T-cell (primary cell): ENCODE measurements at regions of chr14 and their contacts with region 1.

Region 1: DNA sequence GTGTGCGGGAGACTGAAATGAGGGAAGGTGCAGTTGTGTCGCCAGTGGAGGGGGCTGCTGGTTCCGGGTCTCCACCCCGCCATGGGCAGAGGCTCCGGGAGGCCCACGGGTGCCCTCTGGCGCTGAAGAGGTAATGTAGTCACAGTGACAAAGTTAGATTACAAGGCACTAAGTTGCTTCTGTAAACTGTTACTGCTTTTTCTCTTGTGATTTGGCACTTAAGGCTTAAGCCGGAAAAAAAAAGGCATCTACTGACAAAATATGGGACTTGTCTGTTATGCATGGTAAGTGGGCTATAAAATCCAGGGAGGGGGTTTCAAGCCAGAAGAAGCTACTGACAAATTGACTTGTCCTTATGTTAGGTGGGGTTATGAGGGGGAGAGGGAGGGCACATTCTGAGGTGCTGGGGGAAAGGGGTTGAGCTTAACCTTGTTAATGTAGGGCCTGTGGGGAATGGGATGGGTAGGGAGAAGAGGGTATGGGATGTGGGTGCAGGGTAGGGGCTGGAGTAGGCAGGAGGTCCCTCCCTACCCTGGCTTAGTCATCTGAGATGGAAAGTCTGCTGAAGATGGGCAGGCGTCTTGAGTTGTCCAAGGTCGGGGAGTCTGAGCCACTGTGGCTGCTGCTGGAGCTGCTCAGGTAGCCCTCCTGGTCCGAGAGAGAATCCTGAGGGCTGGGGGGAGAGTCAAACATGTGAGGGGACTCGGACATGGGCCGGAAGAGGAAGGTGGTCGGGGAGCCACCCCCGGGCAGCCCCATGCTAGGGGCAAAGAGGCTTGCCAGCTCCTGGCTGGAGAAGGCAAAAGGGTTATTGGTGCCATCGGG is 3.7 kb downstream of the ZFP36L1 start:
- DNase-seq: peak; percentile 73 to 92 (median 88)
- ATAC-seq: peak; percentile 39 to 49 (median 46)
- H3K4me3 ChIP-seq: peak overlapping the region; percentile 95 to 100
- H3K4me3 Mint-ChIP-seq: peak overlapping the region; percentile 91 to 98 (median 96)
- H3K27ac ChIP-seq: peak overlapping the region; percentile 100
- H3K27ac Mint-ChIP-seq: peak overlapping the region; percentile 96 to 97
- H3K4me1 ChIP-seq: peaks cover 34 to 59% of the 10 kb centered on the region in 2 experiments
- H3K4me1 Mint-ChIP-seq: peaks cover 52 to 70% (median 57%) of the 10 kb centered on the region in 3 donors
- H3K27me3 ChIP-seq: no peaks in the 10 kb centered on the region
- H3K27me3 Mint-ChIP-seq: no peaks in the 10 kb centered on the region

Region 2: DNA sequence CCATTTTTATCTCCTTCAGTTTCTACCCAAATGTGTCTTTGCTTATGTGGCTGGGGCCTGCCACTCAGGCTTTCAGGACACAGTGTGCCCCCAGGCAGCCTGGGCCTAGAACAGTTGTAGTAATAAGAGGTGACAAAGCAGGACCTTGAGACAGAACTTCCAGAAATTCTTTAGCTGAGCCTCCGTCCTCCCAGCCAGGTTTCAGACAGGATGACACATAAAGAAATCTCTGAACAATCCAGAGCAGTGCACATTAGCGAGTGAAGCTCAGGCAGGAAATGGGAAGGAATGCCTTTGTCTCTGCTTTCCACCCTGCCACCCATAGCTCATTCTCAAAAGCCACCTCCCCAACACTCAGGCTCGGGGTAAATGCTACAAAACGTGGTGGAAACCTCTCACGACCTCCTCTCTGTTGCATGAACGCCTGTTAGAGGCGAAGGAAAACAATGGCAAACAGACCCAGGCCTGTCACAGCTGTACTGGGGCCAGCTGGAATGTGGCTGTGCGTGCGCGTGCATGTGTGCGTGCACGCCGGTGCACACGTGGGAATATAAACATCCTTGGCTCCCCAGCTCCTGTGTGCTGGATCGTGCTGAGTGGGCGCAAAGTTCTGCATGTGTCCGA is 283.1 kb before region 1 on chr14:
- CTCF ChIA-PET with region 1: interaction called, 3 to 10 read pairs
- POLR2A ChIA-PET with region 1: interaction called, 4 to 18 read pairs
- DNase-seq: no peak
- ATAC-seq: no peak
- H3K4me3 ChIP-seq: no peak overlapping the region
- H3K4me3 Mint-ChIP-seq: peak overlapping the region; percentile 35 to 64 (median 40)
- H3K27ac ChIP-seq: peak overlapping the region; percentile 76
- H3K27ac Mint-ChIP-seq: peak overlapping the region; percentile 88 to 93
- H3K4me1 ChIP-seq: peaks cover 47 to 75% of the 10 kb centered on the region in 2 experiments
- H3K4me1 Mint-ChIP-seq: peaks cover 67 to 87% (median 84%) of the 10 kb centered on the region in 3 donors
- H3K27me3 ChIP-seq: peaks cover 0 to 4% of the 10 kb centered on the region in 2 experiments
- H3K27me3 Mint-ChIP-seq: no peaks in the 10 kb centered on the region

Region 3: DNA sequence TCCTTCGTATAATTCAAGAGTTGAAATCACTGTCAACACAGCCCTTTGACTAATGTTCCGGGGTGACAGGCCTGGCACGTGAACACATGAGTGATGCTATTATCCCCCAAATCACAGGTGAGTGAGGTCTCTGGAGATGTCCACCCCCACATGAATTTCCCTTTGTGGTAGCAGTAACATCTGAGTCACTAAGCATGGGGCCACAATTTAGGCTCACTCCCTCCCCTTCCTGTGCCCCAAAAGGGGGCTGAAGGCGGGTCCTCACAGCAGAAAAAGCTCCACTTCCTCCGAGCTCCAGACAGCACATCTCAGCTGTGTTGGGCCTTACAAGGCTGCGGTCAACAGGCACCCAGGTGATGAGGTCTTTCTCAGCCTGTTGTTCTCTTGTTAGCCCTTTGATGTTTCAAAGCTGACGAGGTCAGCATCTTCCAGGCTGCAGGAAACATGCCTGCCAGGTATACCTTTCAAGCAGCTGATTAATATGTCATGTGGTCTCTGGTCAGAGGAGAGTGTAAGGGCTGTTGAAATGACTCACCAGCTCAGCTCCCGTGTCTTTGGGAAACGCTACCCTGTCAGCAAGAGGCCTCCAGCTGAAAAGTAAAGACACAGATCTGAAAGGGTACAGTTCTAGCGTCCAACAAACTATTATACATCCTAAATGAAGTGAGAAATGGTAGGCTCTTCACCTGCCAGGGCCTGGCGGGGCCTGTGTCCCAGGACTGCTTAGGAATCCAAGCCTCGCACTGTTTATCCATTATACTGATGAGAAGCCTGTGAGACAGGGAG is 103.6 kb before region 1 on chr14:
- CTCF ChIA-PET with region 1: interaction called in 1 of 2 experiments, 11 read pairs
- POLR2A ChIA-PET with region 1: interaction called in 1 of 2 experiments, 5 read pairs
- DNase-seq: peak; percentile 60 to 89 (median 77)
- ATAC-seq: peak; percentile 86 to 90 (median 88)
- H3K4me3 ChIP-seq: no peak overlapping the region
- H3K4me3 Mint-ChIP-seq: peak overlapping the region; percentile 4 to 78 (median 50)
- H3K27ac ChIP-seq: peak overlapping the region; percentile 88
- H3K27ac Mint-ChIP-seq: peak overlapping the region; percentile 95 to 96
- H3K4me1 ChIP-seq: peaks cover 29 to 60% of the 10 kb centered on the region in 2 experiments
- H3K4me1 Mint-ChIP-seq: peaks cover 57 to 71% (median 66%) of the 10 kb centered on the region in 3 donors
- H3K27me3 ChIP-seq: no peaks in the 10 kb centered on the region
- H3K27me3 Mint-ChIP-seq: no peaks in the 10 kb centered on the region

Region 4: GRCh38 chr14:68816262-68816942 is 27.2 kb after region 1 on chr14:
- CTCF ChIA-PET with region 1: interaction called, 36 to 95 read pairs
- POLR2A ChIA-PET with region 1: interaction called, 13 to 26 read pairs
- DNase-seq: peak; percentile 63 to 93 (median 83)
- ATAC-seq: peak; percentile 76 to 82 (median 81)
- H3K4me3 ChIP-seq: peak overlapping the region; percentile 62 to 73
- H3K4me3 Mint-ChIP-seq: peak overlapping the region; percentile 79 to 89 (median 82)
- H3K27ac ChIP-seq: peak overlapping the region; percentile 97
- H3K27ac Mint-ChIP-seq: peak overlapping the region; percentile 97 to 98
- H3K4me1 ChIP-seq: peaks cover 32 to 82% of the 10 kb centered on the region in 2 experiments
- H3K4me1 Mint-ChIP-seq: peaks cover 69 to 86% (median 71%) of the 10 kb centered on the region in 3 donors
- H3K27me3 ChIP-seq: no peaks in the 10 kb centered on the region
- H3K27me3 Mint-ChIP-seq: no peaks in the 10 kb centered on the region